Right ventricle myocardium inferior (tissue), 1 donor: ENCODE measurements at regions of chr12 and their contacts with region 1.

Region 1: GRCh38 chr12:121128970-121129810 is 3.5 kb upstream of the P2RX7 start:
- DNase-seq: peak; percentile 89
- ATAC-seq: peak; percentile 79

Region 2: GRCh38 chr12:121209624-121210572 is 80.7 kb after region 1 on chr12 and contains the start of gene P2RX4:
- intact Hi-C with region 1: loop called (anchors 5 kb)
- DNase-seq: peak; percentile 94
- ATAC-seq: peak; percentile 92
- total RNA-seq, gene P2RX4: 4.7 TPM